ENCODE measurements at regions of chr5 and their contacts with region 1.

Region 1: GRCh38 chr5:1536322-1536845 is 12.6 kb upstream of the LPCAT1 start:
- DNase-seq: peak; percentile 82
- CTCF ChIP-seq: no peak

Region 2: DNA sequence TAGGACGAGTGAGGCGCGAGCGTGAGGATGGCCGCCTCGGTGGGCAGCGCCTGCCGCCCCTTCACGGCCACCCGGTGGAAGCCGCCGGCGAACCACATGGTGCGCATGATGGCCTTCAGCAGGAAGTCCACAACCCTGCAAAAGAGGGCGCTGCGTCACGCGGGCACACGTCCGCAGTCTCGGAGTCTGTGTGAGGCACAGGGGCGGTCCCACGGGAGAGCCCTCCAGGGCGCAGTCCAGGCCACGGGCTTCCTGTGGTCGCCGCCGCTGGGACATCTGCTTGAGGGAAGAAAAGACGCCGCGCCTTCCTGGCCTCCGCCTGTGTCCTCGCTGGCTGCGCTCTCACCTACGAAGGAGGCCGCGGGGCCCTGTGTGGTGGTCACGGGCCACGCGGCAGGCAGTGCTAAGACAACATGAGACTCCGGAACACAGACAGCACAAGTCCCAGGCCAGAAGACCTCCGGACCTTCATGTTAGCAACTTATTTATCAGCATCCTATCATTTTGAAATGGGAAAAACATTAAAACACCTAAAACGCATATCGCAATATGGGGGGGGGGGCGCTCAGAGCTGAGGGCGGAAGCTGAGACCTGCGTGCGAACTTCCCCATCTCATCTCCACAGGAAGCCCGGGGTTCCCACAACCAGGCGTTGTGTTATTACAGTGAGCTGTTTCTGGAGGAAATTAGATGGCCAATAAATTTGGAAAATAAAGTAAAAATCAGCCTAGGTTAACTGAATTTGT is 41.4 kb before region 1 on chr5:
- CTCF ChIA-PET with region 1: no interaction called
- POLR2A ChIA-PET with region 1: no interaction called
- DNase-seq: peak; percentile 75
- CTCF ChIP-seq: peak; percentile 43

Region 3: GRCh38 chr5:1523771-1524480 is 12.5 kb before region 1 on chr5 and contains the start of gene LPCAT1:
- CTCF ChIA-PET with region 1: interaction called, 15 read pairs
- POLR2A ChIA-PET with region 1: no interaction called
- DNase-seq: peak; percentile 93
- CTCF ChIP-seq: no peak